Gastrocnemius medialis (tissue), 4 donors: ENCODE measurements at regions of chr3 and their contacts with region 1.

Region 1: GRCh38 chr3:189337673-189338091 is 165.9 kb downstream of the TPRG1 start:
- DNase-seq: no peak
- ATAC-seq: no peak
- H3K4me3 ChIP-seq: no peak overlapping the region
- H3K27ac ChIP-seq: peak overlapping the region; percentile 66 to 85 (median 76)
- H3K4me1 ChIP-seq: peaks cover 23 to 39% of the 10 kb centered on the region in 2 donors
- H3K27me3 ChIP-seq: no peaks in the 10 kb centered on the region
- CTCF ChIP-seq: no peak
- POLR2A ChIP-seq: no peak

Region 2: DNA sequence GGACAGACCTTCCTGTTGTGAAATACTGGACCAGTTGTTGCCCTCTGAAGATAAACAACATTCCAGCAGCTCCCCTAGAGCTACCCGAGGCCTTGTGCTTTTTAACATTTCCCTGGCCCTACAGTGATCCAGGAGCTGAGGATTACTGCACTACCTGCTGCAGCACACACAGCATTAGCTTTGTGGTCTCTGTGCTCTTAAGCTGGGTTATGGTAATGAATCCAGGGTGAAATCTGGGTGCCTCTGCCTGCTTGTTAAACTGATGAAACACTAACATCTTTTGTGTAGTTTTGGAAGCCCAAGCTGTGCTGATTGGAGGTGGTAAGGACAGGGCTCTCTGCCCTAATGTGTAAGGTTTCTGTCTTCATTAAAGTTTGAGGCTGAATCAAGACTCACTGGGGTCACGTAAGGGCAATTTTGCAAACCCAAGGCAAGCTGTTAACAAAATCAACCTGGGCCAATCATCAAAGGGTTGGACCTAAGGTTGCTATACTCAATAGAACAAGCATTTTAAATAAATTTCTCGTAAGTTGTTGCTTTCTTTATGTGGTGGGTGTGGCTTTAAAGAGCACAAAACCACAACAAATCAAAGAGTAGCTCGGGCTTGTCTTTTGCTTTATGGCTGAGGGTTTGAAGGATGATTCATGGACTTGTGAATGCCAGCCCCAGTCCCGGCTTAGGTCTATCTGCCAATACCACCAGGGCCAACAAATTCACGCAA is 18.0 kb after region 1 on chr3:
- in situ Hi-C with region 1: no loop called
- intact Hi-C with region 1: loop called (anchors 2 kb)
- DNase-seq: peak; percentile 33 to 46
- ATAC-seq: peak; percentile 96
- H3K4me3 ChIP-seq: peak overlapping the region in 1 of 4 donors; percentile 29
- H3K27ac ChIP-seq: peak overlapping the region; percentile 72 to 81 (median 80)
- H3K4me1 ChIP-seq: peaks cover 19 to 38% of the 10 kb centered on the region in 2 donors
- H3K27me3 ChIP-seq: no peaks in the 10 kb centered on the region
- CTCF ChIP-seq: no peak
- POLR2A ChIP-seq: no peak